HepG2 (cell line): ENCODE measurements at regions of chr3 and their contacts with region 1.

Region 1: GRCh38 chr3:38346587-38347410 is at the start of gene XYLB:
- DNase-seq: peak; percentile 73
- ATAC-seq: peak; percentile 90
- H3K4me3 ChIP-seq: peak within 1 kb of the TSS; percentile 89 to 100 (median 94)
- H3K27ac ChIP-seq: peak within 1 kb of the TSS; percentile 93
- H3K4me1 ChIP-seq: peaks cover 48% of the 10 kb centered on the region
- H3K27me3 ChIP-seq: no peaks in the 10 kb centered on the region
- CTCF ChIP-seq: peak; percentile 96
- EP300 ChIP-seq: peak in 1 of 2 experiments; percentile 57; a peak in 1 of 4 replicates
- POLR2A ChIP-seq: peak; percentile 91 to 94
- RAD21 ChIP-seq: peak; percentile 84
- total RNA-seq, gene XYLB: 25.9 and 28.9 TPM in 2 replicates

Region 2: DNA sequence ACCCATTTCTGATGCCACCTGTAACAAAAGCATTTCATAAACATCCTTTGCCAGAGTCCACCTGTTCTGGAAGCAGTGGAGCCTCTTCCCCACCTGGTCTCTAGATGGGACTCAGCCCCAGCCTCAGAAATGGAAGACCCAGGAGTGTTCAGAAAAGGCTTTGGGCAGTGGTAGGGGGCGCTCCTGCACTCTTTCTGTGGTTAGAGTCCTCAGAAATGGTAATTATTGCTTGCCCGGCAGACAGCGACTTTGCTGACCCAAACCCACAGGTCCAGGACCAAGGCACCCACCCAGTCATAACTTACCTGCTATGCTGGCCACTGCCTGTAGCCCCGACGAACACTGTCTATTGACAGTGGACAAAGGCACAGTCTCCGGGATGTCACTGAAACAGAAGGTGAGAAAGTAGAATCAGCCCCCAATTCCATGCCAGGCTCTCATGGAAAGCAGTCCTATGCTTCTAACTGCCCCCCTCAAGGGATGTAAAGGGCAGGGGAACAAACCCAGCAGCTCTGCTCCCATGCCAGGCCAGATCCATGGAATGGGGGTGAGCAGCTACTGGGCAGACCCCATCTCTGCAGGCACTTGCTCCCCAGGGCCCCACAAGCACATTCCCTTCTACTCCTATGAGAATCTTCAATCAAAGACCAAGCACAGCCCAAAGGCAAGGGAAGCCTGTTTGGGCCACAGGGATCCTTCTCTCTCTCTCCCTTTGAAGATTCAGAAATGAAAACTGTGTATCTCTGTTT is 215.0 kb before region 1 on chr3:
- CTCF ChIA-PET with region 1: no interaction called
- POLR2A ChIA-PET with region 1: interaction called, 10 read pairs
- in situ Hi-C with region 1: no loop called
- intact Hi-C with region 1: loop called (anchors 2 kb)
- DNase-seq: no peak
- ATAC-seq: peak; percentile 6; the same call in 2 of the 3 replicates
- H3K4me3 ChIP-seq: peak overlapping the region in 1 of 3 experiments; percentile 61; a peak in 2 of 6 replicates
- H3K27ac ChIP-seq: peak overlapping the region; percentile 97
- H3K4me1 ChIP-seq: peaks cover 86% of the 10 kb centered on the region
- H3K27me3 ChIP-seq: no peaks in the 10 kb centered on the region; a peak in 1 of 5 replicates
- CTCF ChIP-seq: peak; percentile 62
- EP300 ChIP-seq: no peak
- POLR2A ChIP-seq: no peak
- RAD21 ChIP-seq: peak; percentile 59; the same call in 1 of the 2 replicates

Region 3: GRCh38 chr3:38164966-38165680 is 181.7 kb before region 1 on chr3 and contains the start of gene OXSR1:
- CTCF ChIA-PET with region 1: no interaction called
- POLR2A ChIA-PET with region 1: interaction called, 10 read pairs
- in situ Hi-C with region 1: no loop called
- intact Hi-C with region 1: no loop called
- DNase-seq: peak; percentile 99
- ATAC-seq: peak; percentile 93
- H3K4me3 ChIP-seq: peak within 1 kb of the TSS; percentile 86 to 97 (median 90)
- H3K27ac ChIP-seq: peak within 1 kb of the TSS; percentile 96
- H3K4me1 ChIP-seq: peaks cover 48% of the 10 kb centered on the region
- H3K27me3 ChIP-seq: no peaks in the 10 kb centered on the region; a peak in 1 of 5 replicates
- CTCF ChIP-seq: 0 out of 2 replicates have a peak, but pooled peaks have one; percentile 0
- EP300 ChIP-seq: no peak; a peak in 1 of 4 replicates
- POLR2A ChIP-seq: peak; percentile 82 to 89
- RAD21 ChIP-seq: 0 out of 2 replicates have a peak, but pooled peaks have one; percentile 8
- total RNA-seq, gene OXSR1: 32.6 and 41.1 TPM in 2 replicates

Region 4: DNA sequence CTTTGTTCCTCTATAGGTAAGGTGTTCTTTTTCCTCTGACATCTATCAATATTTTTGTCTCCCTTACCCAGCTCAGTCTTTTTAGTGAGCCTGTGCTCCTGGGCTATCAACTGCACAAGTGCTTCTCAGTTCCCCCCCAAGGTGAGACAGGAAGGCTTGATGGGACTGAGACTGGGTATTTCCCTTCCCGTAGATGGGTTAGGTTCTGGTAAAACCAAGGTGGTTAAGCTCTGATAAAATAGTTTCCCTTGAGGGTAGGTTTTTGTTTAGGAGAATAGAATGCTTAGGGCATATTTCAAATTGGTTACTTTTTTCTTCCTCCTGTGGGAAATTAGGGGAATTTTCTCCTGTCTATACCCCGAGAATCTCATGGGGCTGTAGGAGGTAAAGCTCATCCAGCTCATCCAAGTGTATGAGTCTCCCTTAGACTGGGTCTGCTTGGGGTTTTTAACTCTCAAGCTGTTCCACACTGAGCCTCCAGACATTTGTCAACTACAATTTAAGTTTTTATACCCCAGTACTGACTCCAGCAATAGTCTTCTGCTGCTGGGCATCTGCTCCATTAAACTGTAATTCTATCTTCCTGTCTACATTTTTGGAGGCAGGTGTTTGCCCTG is 136.6 kb before region 1 on chr3:
- CTCF ChIA-PET with region 1: no interaction called
- POLR2A ChIA-PET with region 1: no interaction called
- in situ Hi-C with region 1: no loop called
- intact Hi-C with region 1: no loop called
- DNase-seq: no peak
- ATAC-seq: no peak
- H3K4me3 ChIP-seq: no peak overlapping the region
- H3K27ac ChIP-seq: no peak overlapping the region
- H3K4me1 ChIP-seq: no peaks in the 10 kb centered on the region
- H3K27me3 ChIP-seq: no peaks in the 10 kb centered on the region
- CTCF ChIP-seq: no peak
- EP300 ChIP-seq: no peak
- POLR2A ChIP-seq: no peak
- RAD21 ChIP-seq: no peak

Region 5: DNA sequence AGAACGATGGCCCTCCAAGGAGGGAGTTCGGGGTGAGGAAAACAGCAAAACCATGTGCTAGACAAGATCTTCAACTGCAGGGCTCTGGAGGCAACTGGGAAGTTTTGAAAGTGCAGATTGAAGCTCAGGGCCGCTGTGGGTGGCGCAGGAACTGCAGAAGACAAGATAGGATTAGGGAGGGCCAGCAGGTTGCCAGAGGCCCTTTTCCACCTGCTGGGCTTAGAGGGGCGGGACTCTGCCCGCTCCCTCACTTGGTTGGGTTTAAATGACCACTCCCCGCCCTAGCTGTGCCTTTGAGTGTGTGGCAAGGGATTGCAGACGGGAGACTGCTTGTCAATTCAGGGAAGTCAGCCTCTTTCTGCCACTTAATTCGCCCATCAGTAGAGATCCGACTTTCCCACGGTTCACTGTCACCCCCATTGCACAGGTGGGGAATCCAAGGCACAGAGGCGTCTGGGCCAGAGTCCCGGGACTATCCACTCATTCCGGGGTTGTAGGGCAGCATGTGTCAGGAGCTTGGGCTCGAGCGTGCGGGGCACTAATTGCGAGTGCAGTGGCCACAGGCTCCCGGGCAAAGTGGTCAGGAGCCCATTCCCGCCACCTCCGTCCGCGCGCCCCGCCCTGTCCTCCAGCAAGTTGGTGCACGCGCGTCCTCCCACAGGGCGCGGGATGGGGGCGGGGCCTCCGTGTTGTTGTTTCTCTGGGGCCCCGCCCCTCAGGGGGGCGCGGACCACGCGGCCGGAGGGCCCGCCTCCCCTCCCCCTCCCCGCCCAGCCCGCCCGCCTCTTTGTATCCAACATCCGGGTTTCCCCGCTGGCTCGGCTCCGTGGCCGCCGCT is 106.5 kb after region 1 on chr3 and contains the start of gene ACVR2B:
- CTCF ChIA-PET with region 1: no interaction called
- POLR2A ChIA-PET with region 1: interaction called, 10 read pairs
- in situ Hi-C with region 1: no loop called
- intact Hi-C with region 1: no loop called
- DNase-seq: peak; percentile 65
- ATAC-seq: peak; percentile 48
- H3K4me3 ChIP-seq: peak within 1 kb of the TSS; percentile 55 to 79 (median 64)
- H3K27ac ChIP-seq: peak within 1 kb of the TSS; percentile 86
- H3K4me1 ChIP-seq: peaks cover 30% of the 10 kb centered on the region
- H3K27me3 ChIP-seq: no peaks in the 10 kb centered on the region
- CTCF ChIP-seq: no peak
- EP300 ChIP-seq: no peak
- POLR2A ChIP-seq: no peak; a peak in 2 of 4 replicates
- RAD21 ChIP-seq: no peak
- total RNA-seq, gene ACVR2B: 10.0 and 11.3 TPM in 2 replicates

Region 6: GRCh38 chr3:38479431-38480092 is 132.8 kb after region 1 on chr3:
- CTCF ChIA-PET with region 1: interaction called, 8 read pairs
- POLR2A ChIA-PET with region 1: interaction called, 4 read pairs
- in situ Hi-C with region 1: loop called (anchors 5 kb)
- intact Hi-C with region 1: loop called (anchors 2 kb)
- DNase-seq: peak; percentile 47
- ATAC-seq: peak; percentile 85
- H3K4me3 ChIP-seq: no peak overlapping the region
- H3K27ac ChIP-seq: no peak overlapping the region
- H3K4me1 ChIP-seq: peaks cover 10% of the 10 kb centered on the region; the same call in 1 of the 2 replicates
- H3K27me3 ChIP-seq: no peaks in the 10 kb centered on the region
- CTCF ChIP-seq: peak; percentile 87
- EP300 ChIP-seq: no peak
- POLR2A ChIP-seq: no peak
- RAD21 ChIP-seq: peak; percentile 80

Region 7: GRCh38 chr3:38662544-38662943 is 315.7 kb after region 1 on chr3:
- CTCF ChIA-PET with region 1: no interaction called
- POLR2A ChIA-PET with region 1: no interaction called
- in situ Hi-C with region 1: no loop called
- intact Hi-C with region 1: no loop called
- DNase-seq: peak; percentile 52
- ATAC-seq: peak; percentile 90
- H3K4me3 ChIP-seq: no peak overlapping the region
- H3K27ac ChIP-seq: no peak overlapping the region
- H3K4me1 ChIP-seq: no peaks in the 10 kb centered on the region; the same call in 1 of the 2 replicates
- H3K27me3 ChIP-seq: peaks cover 0 to 11% of the 10 kb centered on the region in 2 experiments; a peak in 2 of 5 replicates
- CTCF ChIP-seq: peak; percentile 78
- EP300 ChIP-seq: no peak
- POLR2A ChIP-seq: no peak
- RAD21 ChIP-seq: peak; percentile 25; the same call in 1 of the 2 replicates